Calu3 (cell line): ENCODE measurements at regions of chr1 and their contacts with region 1.

Region 1: GRCh38 chr1:184574588-184574987 is 180.1 kb downstream of the EDEM3 start:
- DNase-seq: no peak
- H3K4me3 Mint-ChIP-seq: no peak overlapping the region
- H3K27ac Mint-ChIP-seq: no peak overlapping the region
- H3K4me1 Mint-ChIP-seq: no peaks in the 10 kb centered on the region
- H3K27me3 Mint-ChIP-seq: no peaks in the 10 kb centered on the region
- CTCF ChIP-seq: no peak

Region 2: DNA sequence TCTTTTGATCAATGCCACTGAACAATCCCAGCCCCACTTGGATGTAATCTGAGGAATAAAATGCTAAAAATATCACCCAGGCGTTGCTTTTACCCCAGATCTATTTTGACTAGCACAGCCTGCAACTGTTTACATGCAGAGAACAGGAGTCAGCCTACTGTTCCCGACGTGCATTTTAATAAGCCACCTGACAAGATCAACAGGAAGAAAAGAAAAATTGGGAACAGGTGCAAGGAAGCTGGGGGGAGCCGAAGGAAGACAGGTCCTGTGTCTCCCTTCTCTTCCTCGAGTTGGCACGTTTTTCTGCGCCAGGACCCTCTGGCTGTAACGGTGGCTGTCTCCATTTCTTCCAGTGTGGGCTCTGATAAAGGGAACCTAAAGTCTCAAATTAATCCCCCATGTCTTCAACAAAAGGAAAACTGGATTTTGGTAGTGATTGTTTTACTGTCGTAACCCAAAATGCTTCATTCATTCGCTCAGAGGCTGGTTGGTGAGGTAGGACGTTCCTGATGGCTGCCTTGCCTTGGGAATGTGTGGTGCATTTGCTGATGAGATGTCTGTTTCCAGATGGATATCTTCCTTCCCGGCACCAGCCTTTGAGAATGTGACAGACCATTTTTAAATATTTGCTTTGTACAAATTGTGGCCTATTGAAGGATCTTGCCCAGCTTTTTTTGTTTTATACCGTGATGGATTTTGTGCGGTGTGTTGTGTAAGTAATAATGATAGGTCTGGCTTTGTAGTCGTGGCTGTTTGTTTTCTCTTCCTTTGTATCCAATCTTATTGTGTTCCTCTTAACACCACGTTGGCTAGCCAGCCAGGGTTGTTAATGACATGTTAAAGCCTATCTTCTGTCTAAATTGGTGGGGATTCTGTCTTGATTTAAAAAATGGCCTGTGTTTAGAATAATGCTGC is 70.3 kb before region 1 on chr1:
- CTCF ChIA-PET with region 1: no interaction called
- intact Hi-C with region 1: no loop called
- DNase-seq: no peak
- H3K4me3 Mint-ChIP-seq: no peak overlapping the region
- H3K27ac Mint-ChIP-seq: no peak overlapping the region
- H3K4me1 Mint-ChIP-seq: peaks cover 12% of the 10 kb centered on the region
- H3K27me3 Mint-ChIP-seq: no peaks in the 10 kb centered on the region
- CTCF ChIP-seq: no peak

Region 3: GRCh38 chr1:184590163-184590750 is 15.7 kb after region 1 on chr1:
- CTCF ChIA-PET with region 1: interaction called, 13 read pairs
- intact Hi-C with region 1: no loop called
- DNase-seq: peak; percentile 88
- H3K4me3 Mint-ChIP-seq: peak overlapping the region; percentile 54
- H3K27ac Mint-ChIP-seq: peak overlapping the region; percentile 96
- H3K4me1 Mint-ChIP-seq: peaks cover 82% of the 10 kb centered on the region
- H3K27me3 Mint-ChIP-seq: no peaks in the 10 kb centered on the region
- CTCF ChIP-seq: no peak